ENCODE measurements at regions of chr6 and their contacts with region 1.

Region 1: GRCh38 chr6:34154668-34155447 is 9.0 kb upstream of the GRM4 start:
- H3K4me3 Mint-ChIP-seq: peak overlapping the region; percentile 45
- H3K27ac Mint-ChIP-seq: no peak overlapping the region
- H3K4me1 Mint-ChIP-seq: peaks cover 27% of the 10 kb centered on the region
- H3K27me3 Mint-ChIP-seq: peaks cover 73% of the 10 kb centered on the region

Region 2: GRCh38 chr6:33458676-33459075 is 696.2 kb before region 1 on chr6:
- intact Hi-C with region 1: no loop called
- H3K4me3 Mint-ChIP-seq: no peak overlapping the region
- H3K27ac Mint-ChIP-seq: no peak overlapping the region
- H3K4me1 Mint-ChIP-seq: peaks cover 16% of the 10 kb centered on the region
- H3K27me3 Mint-ChIP-seq: peaks cover 1% of the 10 kb centered on the region

Region 3: GRCh38 chr6:33744001-33744848 is 410.6 kb before region 1 on chr6:
- intact Hi-C with region 1: loop called (anchors 1 kb)
- H3K4me3 Mint-ChIP-seq: no peak overlapping the region
- H3K27ac Mint-ChIP-seq: no peak overlapping the region
- H3K4me1 Mint-ChIP-seq: peaks cover 16% of the 10 kb centered on the region
- H3K27me3 Mint-ChIP-seq: peaks cover 11% of the 10 kb centered on the region

Region 4: GRCh38 chr6:33768644-33769120 is 386.2 kb before region 1 on chr6:
- intact Hi-C with region 1: loop called (anchors 1 kb)
- H3K4me3 Mint-ChIP-seq: no peak overlapping the region
- H3K27ac Mint-ChIP-seq: no peak overlapping the region
- H3K4me1 Mint-ChIP-seq: peaks cover 14% of the 10 kb centered on the region
- H3K27me3 Mint-ChIP-seq: peaks cover 23% of the 10 kb centered on the region

Region 5: DNA sequence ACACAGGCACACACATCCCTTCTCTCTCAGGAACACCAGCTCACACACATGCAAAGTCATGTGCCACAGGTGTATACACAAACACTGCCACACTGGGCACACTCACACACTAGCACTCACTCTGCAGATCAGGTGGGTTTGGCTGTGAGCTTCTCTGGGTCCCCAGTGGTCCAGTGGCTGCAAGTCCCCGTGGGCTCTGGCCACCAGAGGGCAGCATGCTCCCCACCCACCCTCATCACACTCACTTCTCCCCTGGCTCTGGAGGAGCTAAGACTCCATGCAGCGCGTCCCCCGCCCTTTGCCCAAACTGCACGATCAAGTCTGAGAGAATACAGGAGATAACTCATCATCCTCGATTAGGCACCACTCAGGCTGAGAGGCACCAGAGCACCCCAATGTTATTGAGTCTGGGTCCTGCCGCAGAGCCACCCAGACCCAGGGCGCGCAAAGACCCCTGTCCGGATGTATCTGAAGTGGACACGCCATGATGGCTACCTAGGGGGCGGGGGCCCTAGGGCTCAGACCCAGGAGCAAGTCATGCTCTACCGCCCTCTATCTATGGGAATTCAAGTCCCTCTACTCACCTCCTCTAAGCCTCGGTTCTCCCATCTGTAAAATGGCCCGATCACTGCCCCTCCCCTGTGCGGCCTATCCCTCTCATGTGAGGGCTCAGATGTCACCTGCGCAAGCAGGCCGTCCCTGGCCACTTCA is 99.5 kb before region 1 on chr6:
- intact Hi-C with region 1: loop called (anchors 1 kb)
- H3K4me3 Mint-ChIP-seq: no peak overlapping the region
- H3K27ac Mint-ChIP-seq: no peak overlapping the region
- H3K4me1 Mint-ChIP-seq: no peaks in the 10 kb centered on the region
- H3K27me3 Mint-ChIP-seq: peaks cover 13% of the 10 kb centered on the region

Region 6: DNA sequence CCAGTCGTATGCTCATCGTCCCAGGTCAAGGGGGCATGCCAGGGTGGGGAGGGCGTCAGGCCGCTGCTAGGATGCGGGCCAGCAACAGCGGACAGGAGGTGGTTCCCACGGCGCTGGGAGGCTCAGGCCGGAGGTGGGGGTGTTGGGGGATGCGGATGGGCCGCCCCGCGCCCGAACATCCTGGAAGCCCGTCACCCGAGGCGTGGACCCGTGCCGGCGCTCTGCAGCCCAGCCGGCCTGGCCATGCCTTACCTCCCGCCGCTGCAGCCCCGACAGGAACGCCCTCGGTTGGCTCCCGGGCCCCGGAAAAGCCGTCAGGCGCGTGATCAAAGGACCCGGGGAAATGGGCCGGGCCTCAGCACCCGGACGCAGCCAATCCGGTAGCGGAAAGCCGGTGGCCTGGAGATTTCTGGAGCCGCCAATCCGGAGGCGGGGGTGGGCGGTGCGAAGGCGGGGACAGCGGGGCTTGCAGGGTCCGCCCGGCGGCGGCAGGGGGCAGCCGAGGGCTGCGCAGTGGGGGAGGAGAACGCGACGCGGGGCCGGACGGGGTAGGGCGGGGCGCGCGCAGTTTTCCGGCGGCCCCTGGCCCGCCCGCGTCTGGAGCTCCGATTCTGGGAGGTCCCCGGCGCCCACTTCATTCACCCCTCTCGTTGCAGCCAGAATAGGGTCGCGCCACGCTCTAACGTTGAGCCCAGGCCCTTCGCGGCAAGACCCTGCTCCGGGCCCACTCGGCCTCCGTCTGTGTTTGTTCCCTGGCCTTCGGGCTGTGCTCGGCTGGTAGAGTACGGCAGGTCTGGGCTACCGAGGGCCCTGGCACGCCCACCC is 94.1 kb after region 1 on chr6 and contains the start of gene SMIM29:
- intact Hi-C with region 1: no loop called
- H3K4me3 Mint-ChIP-seq: peak within 1 kb of the TSS; percentile 82
- H3K27ac Mint-ChIP-seq: peak within 1 kb of the TSS; percentile 89
- H3K4me1 Mint-ChIP-seq: peaks cover 76% of the 10 kb centered on the region
- H3K27me3 Mint-ChIP-seq: no peaks in the 10 kb centered on the region

Region 7: GRCh38 chr6:34260576-34261267 is 105.9 kb after region 1 on chr6:
- intact Hi-C with region 1: no loop called
- H3K4me3 Mint-ChIP-seq: no peak overlapping the region
- H3K27ac Mint-ChIP-seq: no peak overlapping the region
- H3K4me1 Mint-ChIP-seq: no peaks in the 10 kb centered on the region
- H3K27me3 Mint-ChIP-seq: no peaks in the 10 kb centered on the region

Region 8: DNA sequence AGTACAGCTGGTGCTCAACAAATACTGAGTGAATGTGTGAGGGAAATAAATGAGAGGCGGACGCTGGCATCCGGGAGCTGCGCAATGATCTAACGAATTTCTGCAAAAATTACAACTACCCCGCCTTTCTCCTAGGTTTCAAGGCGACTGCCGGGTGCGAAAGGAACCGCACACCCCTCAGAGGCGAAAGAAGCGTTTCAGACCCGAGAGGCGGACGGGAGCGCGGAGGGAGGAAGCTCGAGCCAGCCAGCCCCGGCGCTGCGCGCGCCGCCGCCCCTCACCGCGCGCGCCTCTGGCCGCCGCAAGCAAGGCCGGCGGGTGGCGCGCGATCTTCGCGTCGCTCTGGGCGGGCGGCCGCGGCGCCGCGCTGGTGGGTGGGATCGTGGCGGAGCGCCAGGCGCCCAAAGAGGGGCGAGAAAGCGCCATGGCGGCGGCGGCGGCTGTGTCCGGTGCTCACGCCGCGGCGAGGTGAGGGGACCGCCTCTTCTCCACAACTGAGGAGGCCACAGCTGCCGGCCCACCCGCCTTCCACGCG is 636.9 kb after region 1 on chr6 and contains the start of gene BLTP3A:
- intact Hi-C with region 1: no loop called
- H3K4me3 Mint-ChIP-seq: peak within 1 kb of the TSS; percentile 91
- H3K27ac Mint-ChIP-seq: peak within 1 kb of the TSS; percentile 98
- H3K4me1 Mint-ChIP-seq: peaks cover 32% of the 10 kb centered on the region
- H3K27me3 Mint-ChIP-seq: no peaks in the 10 kb centered on the region